ENCODE measurements at regions of chrX and their contacts with region 1.

Region 1: GRCh38 chrX:51614353-51615012 is 4.2 kb downstream of the CENPVL3 start:
- DNase-seq: no peak
- H3K4me3 Mint-ChIP-seq: no peak overlapping the region
- H3K27ac Mint-ChIP-seq: no peak overlapping the region
- H3K4me1 Mint-ChIP-seq: peaks cover 3% of the 10 kb centered on the region
- H3K27me3 Mint-ChIP-seq: peaks cover 29% of the 10 kb centered on the region

Region 2: GRCh38 chrX:51487960-51488267 is 126.6 kb before region 1 on chrX:
- CTCF ChIA-PET with region 1: no interaction called
- intact Hi-C with region 1: loop called (anchors 5 kb)
- DNase-seq: no peak
- H3K4me3 Mint-ChIP-seq: no peak overlapping the region
- H3K27ac Mint-ChIP-seq: no peak overlapping the region
- H3K4me1 Mint-ChIP-seq: no peaks in the 10 kb centered on the region
- H3K27me3 Mint-ChIP-seq: peaks cover 7% of the 10 kb centered on the region

Region 3: GRCh38 chrX:51902510-51903050 is 288.1 kb after region 1 on chrX:
- CTCF ChIA-PET with region 1: no interaction called
- intact Hi-C with region 1: no loop called
- DNase-seq: no peak
- H3K4me3 Mint-ChIP-seq: no peak overlapping the region
- H3K27ac Mint-ChIP-seq: no peak overlapping the region
- H3K4me1 Mint-ChIP-seq: peaks cover 2% of the 10 kb centered on the region
- H3K27me3 Mint-ChIP-seq: no peaks in the 10 kb centered on the region